Astrocyte of the cerebellum (primary cell): ENCODE measurements at regions of chr20 and their contacts with region 1.

Region 1: GRCh38 chr20:16397086-16397485 is 176.2 kb downstream of the KIF16B start:
- DNase-seq: peak; percentile 47
- H3K4me3 ChIP-seq: no peak overlapping the region
- CTCF ChIP-seq: no peak

Region 2: GRCh38 chr20:16350465-16350864 is 46.6 kb before region 1 on chr20:
- in situ Hi-C with region 1: no loop called
- DNase-seq: no peak
- H3K4me3 ChIP-seq: no peak overlapping the region
- CTCF ChIP-seq: no peak

Region 3: GRCh38 chr20:16444057-16444777 is 47.1 kb after region 1 on chr20:
- in situ Hi-C with region 1: loop called (anchors 5 kb)
- DNase-seq: no peak
- H3K4me3 ChIP-seq: no peak overlapping the region
- CTCF ChIP-seq: no peak